ENCODE measurements at regions of chr2 and their contacts with region 1.

Region 1: GRCh38 chr2:126657636-126658318 is 1.8 kb downstream of the GYPC start:
- DNase-seq: peak; percentile 92
- H3K4me3 Mint-ChIP-seq: peak overlapping the region; percentile 92
- H3K27ac Mint-ChIP-seq: peak overlapping the region; percentile 98
- H3K4me1 Mint-ChIP-seq: peaks cover 55% of the 10 kb centered on the region
- H3K27me3 Mint-ChIP-seq: no peaks in the 10 kb centered on the region

Region 2: DNA sequence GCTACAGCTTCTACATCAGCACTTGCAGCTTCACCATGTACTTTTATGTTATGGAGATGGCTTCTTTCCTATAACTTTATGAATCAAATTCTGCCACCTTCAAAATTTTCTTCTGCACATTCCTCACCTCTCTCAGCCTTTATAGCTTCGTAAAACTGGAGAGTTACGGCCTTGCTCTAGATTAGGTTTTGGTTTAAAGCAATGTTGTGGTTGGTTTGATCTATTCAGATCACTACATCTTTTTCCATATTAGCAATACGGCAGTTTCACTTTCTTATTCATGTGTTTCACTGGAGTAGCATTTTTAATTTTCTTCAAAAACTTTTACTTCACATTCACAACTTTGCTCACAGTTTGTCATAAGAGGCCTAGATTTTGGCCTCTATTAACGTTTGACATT is 244.7 kb before region 1 on chr2:
- intact Hi-C with region 1: loop called (anchors 2 kb)
- DNase-seq: peak; percentile 60
- H3K4me3 Mint-ChIP-seq: peak overlapping the region; percentile 9
- H3K27ac Mint-ChIP-seq: no peak overlapping the region
- H3K4me1 Mint-ChIP-seq: peaks cover 7% of the 10 kb centered on the region
- H3K27me3 Mint-ChIP-seq: peaks cover 20% of the 10 kb centered on the region

Region 3: DNA sequence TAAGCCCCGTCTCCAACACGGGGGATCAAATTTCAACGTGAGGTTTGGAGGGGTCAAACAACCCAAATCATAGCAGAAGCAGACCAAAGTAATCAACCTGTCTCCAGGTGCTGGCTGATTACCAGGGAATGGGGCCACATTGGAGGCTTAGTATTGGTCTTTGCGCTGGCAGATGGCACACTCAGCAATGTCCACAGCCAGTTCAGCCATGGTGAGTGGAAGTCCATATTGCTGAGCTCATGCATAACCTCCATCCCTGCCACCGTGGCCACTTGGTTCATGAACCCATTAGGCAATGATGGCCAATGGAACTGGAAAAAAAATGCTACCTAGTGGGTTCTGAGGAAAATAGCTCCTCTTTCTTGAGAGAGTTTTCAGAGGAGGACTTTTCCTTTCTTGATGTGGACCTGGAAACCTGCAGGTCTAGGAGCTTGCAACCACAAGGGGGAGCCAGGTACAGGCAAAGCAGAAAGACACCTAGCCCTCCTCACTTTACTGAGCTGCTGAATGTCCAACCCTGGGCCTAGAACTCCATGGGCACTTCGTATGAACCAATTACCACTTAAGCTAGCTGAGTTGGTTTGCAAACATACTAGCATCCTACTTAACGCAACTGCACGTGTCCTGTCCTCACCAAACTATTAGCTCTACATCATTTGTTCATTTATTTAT is 129.8 kb before region 1 on chr2:
- intact Hi-C with region 1: loop called (anchors 5 kb)
- DNase-seq: peak; percentile 90
- H3K4me3 Mint-ChIP-seq: no peak overlapping the region
- H3K27ac Mint-ChIP-seq: no peak overlapping the region
- H3K4me1 Mint-ChIP-seq: no peaks in the 10 kb centered on the region
- H3K27me3 Mint-ChIP-seq: no peaks in the 10 kb centered on the region

Region 4: GRCh38 chr2:126620302-126620701 is 37.5 kb before region 1 on chr2:
- intact Hi-C with region 1: no loop called
- DNase-seq: no peak
- H3K4me3 Mint-ChIP-seq: no peak overlapping the region
- H3K27ac Mint-ChIP-seq: no peak overlapping the region
- H3K4me1 Mint-ChIP-seq: no peaks in the 10 kb centered on the region
- H3K27me3 Mint-ChIP-seq: no peaks in the 10 kb centered on the region

Region 5: DNA sequence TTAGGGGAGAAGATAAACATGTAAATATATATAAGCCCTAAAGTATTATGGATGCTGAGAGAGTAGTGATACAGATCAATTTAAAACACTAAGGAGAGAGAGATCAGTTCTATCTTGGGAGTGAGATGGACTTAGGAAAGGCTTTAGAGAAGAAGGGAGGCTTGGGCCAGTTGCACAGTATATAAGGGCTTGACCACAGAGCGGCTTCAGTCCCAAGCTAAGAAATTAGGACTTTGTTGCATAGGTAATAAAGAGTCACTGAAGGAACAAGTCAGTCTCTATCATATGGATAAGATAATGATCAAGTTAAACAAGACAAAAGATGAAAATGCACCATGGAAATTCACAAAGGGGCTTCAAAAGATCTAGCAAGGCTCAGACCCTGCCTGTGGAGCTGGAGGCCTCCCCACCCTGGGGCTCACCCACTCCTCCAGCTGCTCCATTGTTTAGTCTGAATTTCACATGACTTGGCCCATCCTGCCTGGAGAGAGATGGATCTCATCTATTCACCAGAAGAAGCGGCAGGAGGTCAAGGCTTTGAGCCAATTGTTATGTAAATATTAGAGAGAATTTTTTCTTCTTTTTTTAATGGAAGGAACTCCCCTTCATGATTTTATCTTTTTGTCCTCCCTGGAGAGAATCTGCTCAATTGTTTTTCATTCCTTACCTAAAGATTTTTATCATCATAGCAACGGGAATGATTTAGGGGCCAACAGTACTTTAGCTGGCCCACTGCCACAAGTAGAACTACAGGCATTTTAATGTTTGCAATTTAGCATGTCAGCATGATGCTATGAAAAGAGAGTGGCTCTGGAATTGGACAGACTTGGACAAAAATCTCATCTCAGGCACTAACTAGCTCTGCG is 42.2 kb after region 1 on chr2:
- intact Hi-C with region 1: no loop called
- DNase-seq: no peak
- H3K4me3 Mint-ChIP-seq: no peak overlapping the region
- H3K27ac Mint-ChIP-seq: no peak overlapping the region
- H3K4me1 Mint-ChIP-seq: peaks cover 8% of the 10 kb centered on the region
- H3K27me3 Mint-ChIP-seq: no peaks in the 10 kb centered on the region

Region 6: DNA sequence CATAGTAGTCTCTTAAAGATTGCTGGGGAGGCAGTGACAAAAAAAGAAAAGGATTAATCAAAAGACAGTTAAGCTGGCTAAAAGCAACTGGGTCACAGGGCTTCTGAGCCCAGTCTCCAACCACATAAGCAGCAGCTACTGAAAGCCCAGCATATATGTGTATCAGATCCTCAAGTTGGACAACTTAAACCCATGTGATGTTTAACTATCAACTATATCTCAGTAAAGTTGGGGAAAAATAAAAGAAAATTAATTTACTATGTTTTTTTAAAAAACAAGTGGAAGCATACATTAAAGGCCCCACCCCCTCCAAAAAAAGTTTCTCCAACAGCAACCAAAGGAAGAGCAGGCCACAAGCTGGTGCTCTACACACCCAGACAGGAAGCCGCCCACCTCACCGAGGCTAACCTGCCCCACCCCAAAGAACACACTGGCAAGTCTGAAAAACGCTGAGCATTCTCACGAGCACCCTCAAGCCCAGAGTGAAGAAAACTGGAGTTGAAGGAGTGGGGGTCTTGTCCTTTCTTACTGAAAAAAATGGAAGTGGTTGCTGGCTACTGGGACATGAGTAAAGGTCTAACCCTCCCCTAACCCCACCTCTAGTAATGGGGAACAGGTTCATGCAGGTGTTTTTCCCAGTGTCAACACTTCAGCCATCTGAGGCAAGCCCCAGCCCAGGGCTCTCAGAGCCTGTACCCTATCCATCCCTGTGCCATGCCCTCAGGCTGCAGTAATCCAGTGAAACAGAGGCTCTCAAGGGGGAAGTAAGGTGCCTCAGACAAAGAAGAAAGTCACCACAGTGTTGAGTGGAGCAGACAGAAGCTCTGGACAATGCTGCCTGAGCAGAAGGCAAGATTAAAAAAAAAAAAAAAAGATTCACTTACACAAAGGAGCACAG is 104.5 kb after region 1 on chr2:
- intact Hi-C with region 1: loop called (anchors 5 kb)
- DNase-seq: peak; percentile 86
- H3K4me3 Mint-ChIP-seq: peak overlapping the region; percentile 67
- H3K27ac Mint-ChIP-seq: peak overlapping the region; percentile 49
- H3K4me1 Mint-ChIP-seq: peaks cover 33% of the 10 kb centered on the region
- H3K27me3 Mint-ChIP-seq: peaks cover 22% of the 10 kb centered on the region

Region 7: DNA sequence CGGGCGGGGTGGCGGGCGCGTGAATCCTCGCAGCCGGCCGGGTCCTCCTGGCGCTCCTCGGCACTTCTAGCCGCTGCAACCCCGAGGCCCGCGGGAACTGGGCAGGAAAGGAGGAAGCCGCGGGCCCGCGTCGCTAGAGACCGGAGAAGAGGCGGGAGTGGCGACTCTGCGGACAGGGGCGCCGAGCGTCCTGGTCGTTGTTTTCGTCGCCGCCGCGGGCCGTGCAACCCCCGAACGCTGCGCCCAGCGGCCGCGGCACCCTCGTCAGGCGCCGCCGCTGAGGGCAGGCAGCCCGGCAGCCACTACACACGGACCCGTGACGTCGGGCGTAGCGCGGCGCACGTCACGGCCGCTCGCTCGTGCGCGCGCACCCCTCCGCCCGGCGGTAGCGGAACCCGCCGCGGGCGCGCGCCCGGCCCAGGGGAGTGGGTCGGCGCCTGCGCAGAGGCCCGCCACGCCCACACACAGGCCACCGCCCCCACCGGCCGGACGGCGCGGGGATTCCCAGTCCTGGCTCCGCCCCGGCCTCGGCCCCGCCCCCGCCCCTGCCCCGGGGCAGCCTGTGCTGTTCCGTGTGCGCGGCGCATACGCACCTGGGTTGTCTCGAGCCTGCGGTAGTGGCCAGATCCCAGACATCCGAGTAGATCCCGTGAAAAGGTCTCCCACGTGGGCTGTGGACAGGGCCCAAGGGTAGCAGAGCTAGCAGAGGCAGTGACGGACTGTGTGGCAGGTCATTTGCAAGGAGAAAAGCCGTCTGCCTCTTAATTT is 730.1 kb after region 1 on chr2 and contains the start of gene MAP3K2:
- intact Hi-C with region 1: loop called (anchors 2 kb)
- DNase-seq: peak; percentile 98
- H3K4me3 Mint-ChIP-seq: peak within 1 kb of the TSS; percentile 88
- H3K27ac Mint-ChIP-seq: peak within 1 kb of the TSS; percentile 98
- H3K4me1 Mint-ChIP-seq: peaks cover 63% of the 10 kb centered on the region
- H3K27me3 Mint-ChIP-seq: no peaks in the 10 kb centered on the region
- total RNA-seq, gene MAP3K2: 53.7 and 57.5 TPM in 2 replicates

Measured in activated CD4-positive, alpha-beta T cell treated with anti-CD3 and anti-CD28 coated beads, Interleukin-2, amount 10 ng/mL, durations not matched to agents 24 days and 14 days (primary cell).